ENCODE measurements at regions of chr20 and their contacts with region 1.

Region 1: DNA sequence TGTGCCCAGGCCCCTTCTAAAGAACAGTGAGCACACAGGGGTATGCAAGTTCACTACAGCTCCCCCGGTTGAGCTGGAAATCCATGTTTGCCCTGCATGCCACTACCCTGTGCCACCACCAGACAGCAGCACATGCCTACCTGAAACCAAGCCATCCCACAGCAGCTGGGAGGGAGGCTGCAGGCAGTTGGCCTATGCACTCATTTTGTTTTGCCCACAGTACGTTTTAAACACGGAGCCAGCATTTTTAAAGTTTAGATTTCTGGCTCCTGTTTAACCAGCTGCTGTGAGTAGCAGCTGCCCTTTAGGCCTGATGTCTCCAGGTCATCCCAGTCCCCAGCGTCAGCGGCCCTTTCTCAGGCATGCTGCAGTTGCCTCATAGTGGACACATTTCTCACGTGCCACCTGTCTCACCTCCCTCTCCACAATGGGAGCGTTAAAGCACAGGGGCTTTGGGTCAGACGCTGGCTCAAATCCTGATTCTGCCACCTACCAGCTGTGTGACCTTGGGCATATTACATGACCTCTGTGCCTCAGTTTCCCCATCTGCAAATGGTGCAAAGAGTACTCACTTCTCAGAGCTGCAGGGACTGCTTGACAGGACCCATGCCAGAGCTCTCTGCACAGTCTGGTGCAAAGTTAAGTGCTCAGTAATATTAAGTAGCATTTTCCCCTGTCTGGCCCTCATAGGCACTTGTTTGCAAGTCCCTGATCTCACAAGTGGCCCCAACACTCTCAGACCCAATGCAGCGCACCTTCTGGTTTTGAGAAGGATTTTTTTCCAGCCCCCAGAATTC is 8.1 kb upstream of the UBE2V1 start:
- DNase-seq: peak; percentile 14
- H3K4me3 ChIP-seq: no peak overlapping the region
- H3K27ac ChIP-seq: peak overlapping the region in 2 of 4 donors; percentile 9 to 40
- H3K4me1 ChIP-seq: peaks cover 7 to 27% (median 8%) of the 10 kb centered on the region in 3 donors
- H3K27me3 ChIP-seq: no peaks in the 10 kb centered on the region
- CTCF ChIP-seq: peak; percentile 55 to 95 (median 92)
- POLR2A ChIP-seq: no peak

Region 2: GRCh38 chr20:50058747-50059404 is 62.2 kb before region 1 on chr20:
- intact Hi-C with region 1: no loop called
- DNase-seq: no peak
- H3K4me3 ChIP-seq: no peak overlapping the region
- H3K27ac ChIP-seq: no peak overlapping the region
- H3K4me1 ChIP-seq: peaks cover 3 to 17% (median 9%) of the 10 kb centered on the region in 3 donors
- H3K27me3 ChIP-seq: peaks cover 0 to 18% (median 0%) of the 10 kb centered on the region in 4 donors
- CTCF ChIP-seq: no peak
- POLR2A ChIP-seq: no peak

Region 3: GRCh38 chr20:50165684-50166554 is 44.8 kb after region 1 on chr20:
- intact Hi-C with region 1: loop called (anchors 5 kb)
- DNase-seq: peak; percentile 76
- H3K4me3 ChIP-seq: peak overlapping the region in 3 of 4 donors; percentile 27 to 55 (median 34)
- H3K27ac ChIP-seq: peak overlapping the region; percentile 77 to 91 (median 88)
- H3K4me1 ChIP-seq: peaks cover 18 to 43% (median 27%) of the 10 kb centered on the region in 3 donors
- H3K27me3 ChIP-seq: no peaks in the 10 kb centered on the region
- CTCF ChIP-seq: no peak
- POLR2A ChIP-seq: peak in 1 of 4 donors; percentile 51

Region 4: GRCh38 chr20:50267041-50267865 is 146.2 kb after region 1 on chr20:
- intact Hi-C with region 1: no loop called
- DNase-seq: no peak
- H3K4me3 ChIP-seq: peak overlapping the region in 1 of 4 donors; percentile 27
- H3K27ac ChIP-seq: peak overlapping the region; percentile 56 to 85 (median 66)
- H3K4me1 ChIP-seq: peaks cover 17 to 21% (median 18%) of the 10 kb centered on the region in 3 donors
- H3K27me3 ChIP-seq: no peaks in the 10 kb centered on the region
- CTCF ChIP-seq: no peak
- POLR2A ChIP-seq: no peak